ENCODE measurements at regions of chr5 and their contacts with region 1.

Region 1: GRCh38 chr5:172106511-172107356 is 81.3 kb downstream of the STK10 start:
- DNase-seq: peak; percentile 89
- H3K4me3 ChIP-seq: peak overlapping the region in 1 of 8 donors; percentile 46
- H3K27ac ChIP-seq: peak overlapping the region in 4 of 8 donors; percentile 37 to 93 (median 86)
- H3K4me1 ChIP-seq: peaks cover 31 to 97% (median 55%) of the 10 kb centered on the region in 6 donors
- H3K27me3 ChIP-seq: no peaks in the 10 kb centered on the region
- CTCF ChIP-seq: peak; percentile 88 to 98 (median 94)
- POLR2A ChIP-seq: no peak

Region 2: DNA sequence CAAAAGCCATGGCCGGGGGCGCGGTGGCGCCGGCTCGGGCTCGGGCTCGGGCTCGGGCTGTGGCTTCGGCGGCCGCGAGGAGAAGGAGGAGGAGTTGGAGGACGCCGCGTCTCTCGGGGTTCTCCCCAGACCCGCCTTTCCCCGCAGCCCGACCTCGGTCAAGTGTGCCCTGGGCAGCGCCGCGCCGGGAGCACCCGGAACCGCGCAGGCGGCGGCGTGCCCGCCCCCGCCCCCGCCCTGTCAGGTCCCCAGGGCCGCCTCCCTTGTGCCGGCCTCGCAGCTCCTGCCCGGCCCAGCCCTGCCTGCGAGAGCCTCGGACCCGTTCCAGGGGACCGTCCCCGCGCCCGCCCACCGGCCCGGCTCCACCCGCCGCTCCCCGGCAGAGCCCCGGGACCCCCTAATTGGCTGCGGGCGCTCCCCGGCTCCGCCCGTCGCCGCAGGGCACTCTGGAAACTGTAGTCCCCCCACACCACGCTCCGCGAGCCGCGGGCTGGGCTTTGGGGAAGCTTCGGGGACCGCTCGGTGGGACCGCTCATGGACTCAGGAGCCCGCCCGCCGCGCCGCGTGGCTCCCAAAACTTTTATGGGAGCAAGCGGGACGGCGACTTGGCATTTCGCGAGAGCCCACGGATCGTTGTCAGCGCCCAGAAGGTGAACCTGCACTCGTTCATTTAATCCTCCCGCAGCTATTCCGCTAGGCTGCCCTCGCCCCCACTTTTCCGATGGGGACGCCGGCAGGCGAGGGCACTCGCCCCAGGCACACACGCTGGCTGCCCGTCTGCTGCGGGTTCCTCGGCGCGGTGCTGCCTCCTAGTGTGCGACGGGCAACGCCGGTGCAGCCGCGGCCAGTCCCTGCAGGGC is 81.5 kb after region 1 on chr5 and contains the start of gene STK10:
- intact Hi-C with region 1: loop called (anchors 2 kb)
- DNase-seq: peak; percentile 99
- H3K4me3 ChIP-seq: peak within 1 kb of the TSS; percentile 67 to 96 (median 91)
- H3K27ac ChIP-seq: peak within 1 kb of the TSS; percentile 69 to 99 (median 96)
- H3K4me1 ChIP-seq: peaks cover 13 to 57% (median 44%) of the 10 kb centered on the region in 6 donors
- H3K27me3 ChIP-seq: no peaks in the 10 kb centered on the region
- CTCF ChIP-seq: peak; percentile 89 to 96 (median 93)
- POLR2A ChIP-seq: peak in 1 of 3 donors; percentile 13
- total RNA-seq, gene STK10: 112 to 290 (median 182) TPM

Region 3: GRCh38 chr5:172293054-172293744 is 186.5 kb after region 1 on chr5:
- intact Hi-C with region 1: loop called (anchors 10 kb)
- DNase-seq: no peak
- H3K4me3 ChIP-seq: no peak overlapping the region
- H3K27ac ChIP-seq: no peak overlapping the region
- H3K4me1 ChIP-seq: peaks cover 0 to 10% (median 3%) of the 10 kb centered on the region in 6 donors
- H3K27me3 ChIP-seq: no peaks in the 10 kb centered on the region
- CTCF ChIP-seq: peak; percentile 55 to 81 (median 75)
- POLR2A ChIP-seq: no peak